Aorta (tissue), 5 donors: ENCODE measurements at regions of chr3 and their contacts with region 1.

Region 1: DNA sequence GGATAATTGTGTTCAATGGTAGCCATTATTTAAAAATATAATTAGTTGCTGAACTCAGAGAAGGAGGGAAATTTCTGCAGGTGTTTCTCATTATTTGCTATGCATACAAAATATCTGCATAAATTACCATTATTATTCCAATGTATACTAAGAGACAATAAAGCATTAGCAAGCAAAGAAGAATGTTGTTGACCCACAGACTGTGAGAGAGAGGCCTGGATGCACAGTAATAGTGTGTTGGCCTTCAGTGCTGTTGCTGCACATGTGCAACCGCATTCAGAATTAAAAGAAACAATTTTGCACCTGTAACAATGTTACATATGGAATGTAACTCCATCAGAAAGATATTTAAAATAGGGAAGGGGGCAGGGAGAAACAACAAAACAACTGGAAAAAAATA is 155.6 kb upstream of the KCNH8 start:
- DNase-seq: no peak
- ATAC-seq: no peak
- H3K4me3 ChIP-seq: no peak overlapping the region
- H3K27ac ChIP-seq: no peak overlapping the region
- H3K4me1 ChIP-seq: no peaks in the 10 kb centered on the region
- H3K27me3 ChIP-seq: no peaks in the 10 kb centered on the region

Region 2: GRCh38 chr3:18559331-18559842 is 433.3 kb before region 1 on chr3:
- intact Hi-C with region 1: loop called (anchors 5 kb)
- DNase-seq: no peak
- ATAC-seq: peak; percentile 50
- H3K4me3 ChIP-seq: no peak overlapping the region
- H3K27ac ChIP-seq: no peak overlapping the region
- H3K4me1 ChIP-seq: no peaks in the 10 kb centered on the region
- H3K27me3 ChIP-seq: peaks cover 0 to 2% of the 10 kb centered on the region in 2 donors